Motor neuron (in vitro differentiated cells): ENCODE measurements at regions of chr20 and their contacts with region 1.

Region 1: DNA sequence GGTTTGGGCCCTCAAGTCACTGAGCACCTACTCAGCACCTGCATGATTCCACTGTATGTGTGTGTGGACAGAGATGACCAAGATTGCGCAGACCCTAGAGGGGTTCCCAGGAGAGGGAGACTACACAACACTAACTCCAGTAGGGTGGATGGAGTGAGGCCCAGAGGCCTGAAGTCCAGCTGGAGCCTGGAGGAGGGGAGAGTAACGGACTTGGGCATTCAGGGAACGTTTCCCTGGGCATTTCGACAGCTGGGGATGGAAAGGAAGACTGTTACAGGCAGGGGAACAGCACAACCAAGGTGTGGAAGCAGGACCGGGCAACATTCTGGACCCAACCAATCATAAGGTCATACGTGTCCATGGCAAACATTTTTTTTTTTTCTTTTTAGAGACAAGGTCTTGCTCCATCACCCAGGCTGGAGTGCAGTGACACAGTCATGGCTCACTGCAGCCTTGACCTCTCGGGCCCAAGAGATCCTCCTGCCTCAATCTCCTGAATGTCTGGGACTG is 11.1 kb upstream of the CEBPB start:
- ATAC-seq: peak; percentile 25 to 64 (median 48)
- H3K4me3 ChIP-seq: no peak overlapping the region
- H3K27ac ChIP-seq: no peak overlapping the region
- H3K4me1 ChIP-seq: no peaks in the 10 kb centered on the region

Region 2: GRCh38 chr20:49964964-49965780 is 214.4 kb before region 1 on chr20:
- in situ Hi-C with region 1: no loop called
- ATAC-seq: peak in 4 of 8 experiments; percentile 9 to 86 (median 36)
- H3K4me3 ChIP-seq: no peak overlapping the region
- H3K27ac ChIP-seq: no peak overlapping the region
- H3K4me1 ChIP-seq: no peaks in the 10 kb centered on the region

Region 3: GRCh38 chr20:50460460-50461267 is 281.1 kb after region 1 on chr20:
- in situ Hi-C with region 1: loop called in 7 of 9 experiments (anchors 5 to 25 kb)
- ATAC-seq: peak; percentile 87 to 95 (median 90)
- H3K4me3 ChIP-seq: no peak overlapping the region
- H3K27ac ChIP-seq: no peak overlapping the region
- H3K4me1 ChIP-seq: peaks cover 0 to 2% of the 10 kb centered on the region in 2 donors

Region 4: GRCh38 chr20:50680412-50680908 is 500.9 kb after region 1 on chr20:
- in situ Hi-C with region 1: no loop called
- ATAC-seq: peak in 5 of 8 experiments; percentile 11 to 77 (median 67)
- H3K4me3 ChIP-seq: no peak overlapping the region
- H3K27ac ChIP-seq: peak overlapping the region in 1 of 2 donors; percentile 42
- H3K4me1 ChIP-seq: peaks cover 10 to 11% of the 10 kb centered on the region in 2 donors